ENCODE measurements at regions of chr10 and their contacts with region 1.

Region 1: DNA sequence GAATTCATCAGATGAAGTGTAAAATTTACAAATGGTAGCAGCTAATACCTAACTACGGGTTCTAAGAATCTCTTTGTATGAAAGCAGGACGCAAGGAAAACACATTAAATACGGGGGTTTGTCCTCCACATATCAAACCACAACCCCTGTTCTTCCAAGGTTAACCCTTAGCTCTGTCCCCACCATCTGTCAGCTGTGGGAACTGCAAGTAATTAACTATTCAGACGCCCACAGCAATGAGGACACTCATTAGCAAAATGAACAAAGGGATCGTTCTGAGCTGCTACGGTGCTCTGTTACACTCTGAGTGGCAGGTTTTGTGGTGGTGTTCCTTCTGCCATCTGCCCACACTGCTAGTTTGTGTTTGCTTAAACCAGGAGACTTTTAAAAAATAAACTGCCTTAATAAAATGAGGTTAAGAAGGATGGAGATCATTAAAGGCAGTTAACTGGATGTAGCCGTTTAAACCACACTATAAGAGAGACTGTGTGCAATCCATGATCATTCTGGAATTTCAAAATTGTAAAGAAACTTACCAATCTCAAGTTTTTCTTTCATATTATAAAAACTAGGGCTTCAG is 51.4 kb downstream of the C10orf67 start:
- DNase-seq: no peak
- ATAC-seq: peak; percentile 80
- H3K4me3 ChIP-seq: no peak overlapping the region
- H3K27ac ChIP-seq: no peak overlapping the region
- H3K4me1 ChIP-seq: no peaks in the 10 kb centered on the region
- H3K27me3 ChIP-seq: peaks cover 2% of the 10 kb centered on the region; the same call in 1 of the 2 replicates
- CTCF ChIP-seq: peak; percentile 75

Region 2: DNA sequence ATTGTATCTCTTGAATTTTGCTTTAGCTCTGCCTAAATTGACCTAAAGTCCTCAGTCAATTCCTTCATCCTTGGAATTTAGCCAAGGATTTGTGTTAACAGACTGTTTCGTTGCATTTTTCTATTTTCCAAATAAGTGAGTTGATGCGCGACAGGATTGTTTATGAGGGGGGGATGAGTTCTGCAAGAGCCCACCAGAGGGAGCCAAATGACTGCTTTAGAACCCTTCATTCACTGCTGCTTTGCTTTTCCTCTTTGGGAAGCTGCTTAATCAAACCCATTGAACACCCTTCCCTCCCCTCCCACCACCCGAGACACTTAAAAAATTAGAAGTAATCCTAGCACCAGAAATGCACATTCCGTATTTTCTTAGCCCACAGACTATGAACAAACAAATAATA is 134.9 kb before region 1 on chr10:
- CTCF ChIA-PET with region 1: interaction called, 3 read pairs
- POLR2A ChIA-PET with region 1: no interaction called
- in situ Hi-C with region 1: no loop called
- intact Hi-C with region 1: loop called (anchors 1 kb)
- DNase-seq: peak; percentile 39
- ATAC-seq: peak; percentile 88
- H3K4me3 ChIP-seq: no peak overlapping the region
- H3K27ac ChIP-seq: no peak overlapping the region
- H3K4me1 ChIP-seq: 0 out of 2 replicates have a peak, but pooled peaks cover 3% of the 10 kb centered on the region
- H3K27me3 ChIP-seq: no peaks in the 10 kb centered on the region
- CTCF ChIP-seq: peak; percentile 82

Region 3: GRCh38 chr10:23499372-23500132 is 206.3 kb after region 1 on chr10:
- CTCF ChIA-PET with region 1: no interaction called
- POLR2A ChIA-PET with region 1: no interaction called
- in situ Hi-C with region 1: no loop called
- intact Hi-C with region 1: no loop called
- DNase-seq: no peak
- ATAC-seq: no peak
- H3K4me3 ChIP-seq: no peak overlapping the region
- H3K27ac ChIP-seq: no peak overlapping the region
- H3K4me1 ChIP-seq: no peaks in the 10 kb centered on the region
- H3K27me3 ChIP-seq: no peaks in the 10 kb centered on the region; the same call in 1 of the 2 replicates
- CTCF ChIP-seq: no peak

Measured in Panc1 (cell line).